Naive thymus-derived CD4-positive, alpha-beta T cell (primary cell): ENCODE measurements at regions of chr10 and their contacts with region 1.

Region 1: DNA sequence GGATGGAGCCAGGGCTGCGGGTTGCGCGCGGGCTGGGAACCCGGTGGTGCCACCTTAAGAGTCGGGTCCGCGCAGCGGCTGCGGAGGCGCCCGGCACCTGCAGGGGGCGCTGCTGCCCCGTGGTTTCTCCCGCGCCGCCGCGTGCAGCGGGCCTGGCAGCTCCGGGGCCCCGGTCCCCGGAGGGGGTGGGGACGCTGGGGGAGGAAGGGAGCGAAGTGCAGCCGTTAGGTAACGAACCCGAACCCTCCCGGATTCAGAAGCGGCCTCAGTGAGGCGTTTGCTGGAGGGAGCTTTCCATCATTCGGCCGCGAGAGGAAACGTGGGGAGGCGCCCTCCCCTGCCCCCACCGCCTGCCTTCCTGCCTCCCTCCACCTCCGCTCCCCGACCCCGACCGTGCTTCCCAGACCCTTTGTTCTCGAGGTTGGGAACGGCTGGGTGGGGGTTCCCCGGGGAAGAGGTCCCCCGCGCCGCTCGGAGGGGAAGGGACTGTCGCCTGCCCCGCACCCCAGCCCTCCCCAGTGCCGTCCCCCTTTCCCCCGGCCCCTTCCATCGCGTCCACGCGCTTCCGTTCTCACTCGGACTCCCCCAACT is 29.6 kb downstream of the SKIDA1 start:
- DNase-seq: peak; percentile 74 to 97 (median 89)
- ATAC-seq: peak; percentile 94
- H3K4me3 ChIP-seq: peak overlapping the region; percentile 79
- H3K4me3 Mint-ChIP-seq: peak overlapping the region; percentile 86 to 95 (median 90)
- H3K27ac ChIP-seq: no peak overlapping the region
- H3K27ac Mint-ChIP-seq: peak overlapping the region in 6 of 9 donors; percentile 47 to 76 (median 55)
- H3K4me1 ChIP-seq: peaks cover 20% of the 10 kb centered on the region in 2 donors
- H3K4me1 Mint-ChIP-seq: peaks cover 19 to 38% (median 25%) of the 10 kb centered on the region in 7 donors
- H3K27me3 ChIP-seq: peaks cover 0 to 32% of the 10 kb centered on the region in 2 donors
- H3K27me3 Mint-ChIP-seq: peaks cover 47 to 81% (median 52%) of the 10 kb centered on the region in 5 donors

Region 2: DNA sequence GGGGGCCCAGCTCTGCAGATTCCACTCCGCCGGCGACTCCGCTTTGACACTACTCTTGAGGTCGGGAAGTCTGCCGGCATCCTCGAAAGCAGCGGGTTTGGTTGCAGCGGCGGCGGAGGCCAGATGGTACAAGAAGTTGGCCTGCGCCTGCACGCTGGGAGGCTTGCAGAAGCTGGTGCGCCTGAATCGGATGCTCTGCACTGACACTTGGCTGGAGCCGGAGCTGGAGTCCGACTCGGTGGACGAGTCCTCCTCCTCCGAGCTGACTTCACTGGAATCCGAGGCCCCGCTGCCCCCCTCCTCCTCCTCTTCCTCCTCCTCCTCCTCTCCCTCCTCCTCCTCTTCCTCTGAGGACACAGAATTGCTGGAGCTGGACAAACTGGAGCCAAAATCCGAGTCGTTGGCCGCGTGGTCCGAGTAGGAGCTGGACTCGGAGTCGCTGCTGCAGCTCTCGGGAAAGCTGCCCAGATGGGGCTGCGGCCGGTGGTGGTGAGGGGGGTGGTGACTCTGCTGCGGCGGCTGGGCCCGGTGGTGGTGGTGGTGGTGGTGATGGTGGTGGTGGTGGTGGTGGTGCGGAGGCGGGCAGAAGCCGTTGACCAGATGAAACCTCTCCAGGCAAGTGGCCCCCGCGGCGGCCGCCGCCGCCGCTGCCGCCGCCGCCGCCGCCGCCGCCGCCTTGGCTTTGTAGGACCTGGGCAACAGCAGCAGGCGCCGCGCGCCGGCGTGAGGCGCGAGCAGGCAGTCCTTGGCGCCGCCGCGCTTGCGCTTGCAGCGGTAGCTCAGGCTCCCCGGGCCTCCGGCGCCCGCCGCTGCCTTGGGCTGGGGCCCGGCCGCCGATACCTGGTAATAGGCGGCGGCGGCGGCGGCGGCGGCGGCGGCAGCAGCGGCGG is 20.6 kb after region 1 on chr10:
- CTCF ChIA-PET with region 1: interaction called, 3 read pairs
- POLR2A ChIA-PET with region 1: interaction called, 13 read pairs
- intact Hi-C with region 1: loop called (anchors 1 kb)
- DNase-seq: peak in 8 of 9 donors; percentile 27 to 59 (median 40)
- ATAC-seq: peak; percentile 85
- H3K4me3 ChIP-seq: peak overlapping the region; percentile 28
- H3K4me3 Mint-ChIP-seq: peak overlapping the region; percentile 60 to 87 (median 80)
- H3K27ac ChIP-seq: no peak overlapping the region
- H3K27ac Mint-ChIP-seq: no peak overlapping the region
- H3K4me1 ChIP-seq: peaks cover 29 to 37% of the 10 kb centered on the region in 2 donors
- H3K4me1 Mint-ChIP-seq: peaks cover 17 to 46% (median 41%) of the 10 kb centered on the region in 7 donors
- H3K27me3 ChIP-seq: peaks cover 53 to 57% of the 10 kb centered on the region in 2 donors
- H3K27me3 Mint-ChIP-seq: peaks cover 68 to 86% (median 85%) of the 10 kb centered on the region in 5 donors

Region 3: GRCh38 chr10:21579291-21579690 is 83.4 kb after region 1 on chr10:
- CTCF ChIA-PET with region 1: no interaction called
- POLR2A ChIA-PET with region 1: no interaction called
- intact Hi-C with region 1: no loop called
- DNase-seq: no peak
- ATAC-seq: no peak
- H3K4me3 ChIP-seq: no peak overlapping the region
- H3K4me3 Mint-ChIP-seq: no peak overlapping the region
- H3K27ac ChIP-seq: no peak overlapping the region
- H3K27ac Mint-ChIP-seq: no peak overlapping the region
- H3K4me1 ChIP-seq: no peaks in the 10 kb centered on the region
- H3K4me1 Mint-ChIP-seq: peaks cover 11 to 54% (median 44%) of the 10 kb centered on the region in 7 donors
- H3K27me3 ChIP-seq: no peaks in the 10 kb centered on the region
- H3K27me3 Mint-ChIP-seq: no peaks in the 10 kb centered on the region

Region 4: DNA sequence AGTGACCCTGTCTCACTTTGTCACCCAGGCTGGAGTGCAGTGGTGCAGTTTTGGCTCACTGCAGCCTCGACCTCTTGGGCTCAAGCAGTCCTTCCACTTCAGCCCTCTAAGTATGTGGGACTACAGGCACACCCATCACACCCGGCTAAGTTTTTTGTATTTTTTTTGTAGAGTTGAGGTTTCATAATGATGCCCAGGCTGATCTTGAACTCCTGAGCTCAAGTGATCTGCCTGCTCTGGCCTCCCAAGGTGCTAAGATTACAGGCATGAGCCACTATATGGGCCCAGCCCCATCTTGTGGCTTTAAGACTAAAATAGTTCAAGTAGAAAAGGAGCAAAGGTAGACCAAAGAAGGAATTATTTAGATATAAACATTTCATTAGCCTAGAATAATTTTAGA is 103.7 kb after region 1 on chr10:
- CTCF ChIA-PET with region 1: no interaction called
- POLR2A ChIA-PET with region 1: no interaction called
- intact Hi-C with region 1: loop called in 1 of 2 experiments (anchors 10 kb)
- DNase-seq: no peak
- ATAC-seq: no peak
- H3K4me3 ChIP-seq: no peak overlapping the region
- H3K4me3 Mint-ChIP-seq: no peak overlapping the region
- H3K27ac ChIP-seq: no peak overlapping the region
- H3K27ac Mint-ChIP-seq: peak overlapping the region in 2 of 9 donors; percentile 48 to 78
- H3K4me1 ChIP-seq: no peaks in the 10 kb centered on the region
- H3K4me1 Mint-ChIP-seq: peaks cover 14 to 49% (median 39%) of the 10 kb centered on the region in 7 donors
- H3K27me3 ChIP-seq: no peaks in the 10 kb centered on the region
- H3K27me3 Mint-ChIP-seq: no peaks in the 10 kb centered on the region

Region 5: GRCh38 chr10:21746118-21746517 is 250.3 kb after region 1 on chr10:
- CTCF ChIA-PET with region 1: no interaction called
- POLR2A ChIA-PET with region 1: no interaction called
- intact Hi-C with region 1: loop called in 1 of 2 experiments (anchors 5 kb)
- DNase-seq: peak in 3 of 9 donors; percentile 19 to 37 (median 36)
- ATAC-seq: peak; percentile 72
- H3K4me3 ChIP-seq: no peak overlapping the region
- H3K4me3 Mint-ChIP-seq: peak overlapping the region in 9 of 10 donors; percentile 23 to 70 (median 53)
- H3K27ac ChIP-seq: peak overlapping the region; percentile 18
- H3K27ac Mint-ChIP-seq: peak overlapping the region; percentile 73 to 95 (median 90)
- H3K4me1 ChIP-seq: peaks cover 7 to 19% of the 10 kb centered on the region in 2 donors
- H3K4me1 Mint-ChIP-seq: peaks cover 8 to 44% (median 28%) of the 10 kb centered on the region in 7 donors
- H3K27me3 ChIP-seq: no peaks in the 10 kb centered on the region
- H3K27me3 Mint-ChIP-seq: no peaks in the 10 kb centered on the region

Region 6: DNA sequence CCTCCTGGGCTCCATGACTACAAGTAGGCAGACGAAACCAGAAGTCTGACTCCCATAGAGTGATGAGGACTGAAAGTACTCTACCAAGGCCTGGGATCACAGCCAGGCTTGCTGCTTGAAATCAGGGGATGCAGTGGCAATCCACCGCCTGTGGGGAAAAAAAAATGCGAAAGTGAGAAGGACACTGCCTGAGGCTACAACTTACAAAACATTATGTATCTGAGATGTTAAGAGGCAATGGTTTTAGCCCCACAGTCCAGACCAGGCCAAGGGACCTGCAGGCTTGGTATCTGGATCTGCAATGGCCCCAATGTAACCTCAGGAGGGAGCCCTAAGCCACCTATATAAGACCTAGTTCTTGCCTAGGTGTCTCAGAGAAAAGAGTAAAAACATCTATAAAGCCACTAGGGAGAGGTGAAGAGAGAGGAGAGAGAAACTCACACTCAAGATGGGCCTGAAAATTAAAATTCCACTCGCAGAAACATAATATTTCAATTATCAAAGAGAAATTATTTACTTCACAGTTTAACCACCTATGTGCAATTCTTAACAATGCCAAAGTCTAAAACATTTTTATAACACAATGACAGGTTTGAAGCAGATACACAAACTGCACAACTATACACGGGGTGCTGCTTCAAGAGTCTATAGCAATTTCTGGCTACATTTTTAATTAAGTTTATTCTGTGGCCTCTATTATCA is 493.8 kb after region 1 on chr10:
- CTCF ChIA-PET with region 1: interaction called, 13 read pairs
- POLR2A ChIA-PET with region 1: no interaction called
- intact Hi-C with region 1: loop called in 1 of 2 experiments (anchors 1 kb)
- DNase-seq: peak in 7 of 9 donors; percentile 14 to 52 (median 36)
- ATAC-seq: peak; percentile 89
- H3K4me3 ChIP-seq: no peak overlapping the region
- H3K4me3 Mint-ChIP-seq: no peak overlapping the region
- H3K27ac ChIP-seq: no peak overlapping the region
- H3K27ac Mint-ChIP-seq: peak overlapping the region in 2 of 9 donors; percentile 10 to 47
- H3K4me1 ChIP-seq: no peaks in the 10 kb centered on the region
- H3K4me1 Mint-ChIP-seq: peaks cover 0 to 14% (median 5%) of the 10 kb centered on the region in 7 donors
- H3K27me3 ChIP-seq: no peaks in the 10 kb centered on the region
- H3K27me3 Mint-ChIP-seq: no peaks in the 10 kb centered on the region

Region 7: GRCh38 chr10:22251751-22252223 is 755.9 kb after region 1 on chr10:
- CTCF ChIA-PET with region 1: no interaction called
- POLR2A ChIA-PET with region 1: no interaction called
- intact Hi-C with region 1: loop called (anchors 2 kb)
- DNase-seq: peak in 8 of 9 donors; percentile 48 to 76 (median 73)
- ATAC-seq: peak; percentile 73
- H3K4me3 ChIP-seq: peak overlapping the region; percentile 82
- H3K4me3 Mint-ChIP-seq: peak overlapping the region; percentile 90 to 100 (median 94)
- H3K27ac ChIP-seq: peak overlapping the region; percentile 87
- H3K27ac Mint-ChIP-seq: peak overlapping the region; percentile 95 to 100 (median 99)
- H3K4me1 ChIP-seq: peaks cover 0 to 4% of the 10 kb centered on the region in 2 donors
- H3K4me1 Mint-ChIP-seq: peaks cover 8 to 40% (median 38%) of the 10 kb centered on the region in 7 donors
- H3K27me3 ChIP-seq: no peaks in the 10 kb centered on the region
- H3K27me3 Mint-ChIP-seq: peaks cover 8 to 31% (median 10%) of the 10 kb centered on the region in 5 donors

Region 8: DNA sequence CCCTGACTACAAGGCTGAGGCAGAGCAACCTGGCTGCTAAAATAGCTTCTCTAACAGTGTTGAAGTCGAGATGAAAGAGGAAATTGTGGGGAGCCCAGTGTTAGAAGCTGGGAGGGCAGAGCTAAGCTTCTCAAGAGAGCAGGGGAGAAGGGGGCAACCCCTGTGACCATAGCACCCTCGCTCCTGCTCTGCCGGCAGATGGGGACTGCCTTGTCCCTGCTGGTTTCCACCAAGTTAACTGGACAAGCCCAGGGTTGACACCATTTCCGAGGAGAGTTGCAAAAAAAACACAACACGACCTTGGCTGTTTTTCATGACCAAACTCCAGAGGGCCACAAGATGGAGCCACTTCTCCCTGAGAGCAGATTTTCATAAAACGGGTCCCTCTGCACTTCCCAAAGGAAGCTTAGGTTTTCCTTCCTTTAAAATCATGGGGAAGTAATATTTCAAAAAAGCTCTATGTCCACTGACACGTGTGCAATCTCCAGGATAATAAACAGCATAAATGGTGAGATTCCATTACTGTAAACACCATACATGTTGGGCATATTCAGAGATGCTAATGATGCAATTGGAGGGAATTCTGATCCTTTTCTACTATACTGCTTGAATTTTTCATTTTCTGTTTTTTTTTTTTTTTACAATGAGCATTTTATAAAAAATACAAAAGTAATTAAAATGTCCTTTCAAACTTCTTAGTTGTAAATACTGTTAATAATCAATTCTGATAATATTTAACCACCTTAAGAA is 1078.1 kb after region 1 on chr10:
- CTCF ChIA-PET with region 1: no interaction called
- POLR2A ChIA-PET with region 1: no interaction called
- intact Hi-C with region 1: loop called in 1 of 2 experiments (anchors 10 kb)
- DNase-seq: peak in 5 of 9 donors; percentile 16 to 26 (median 24)
- ATAC-seq: peak; percentile 67
- H3K4me3 ChIP-seq: no peak overlapping the region
- H3K4me3 Mint-ChIP-seq: peak overlapping the region in 2 of 10 donors; percentile 24 to 66
- H3K27ac ChIP-seq: no peak overlapping the region
- H3K27ac Mint-ChIP-seq: peak overlapping the region; percentile 8 to 91 (median 62)
- H3K4me1 ChIP-seq: peaks cover 0 to 33% of the 10 kb centered on the region in 2 donors
- H3K4me1 Mint-ChIP-seq: peaks cover 32 to 80% (median 62%) of the 10 kb centered on the region in 7 donors
- H3K27me3 ChIP-seq: no peaks in the 10 kb centered on the region
- H3K27me3 Mint-ChIP-seq: no peaks in the 10 kb centered on the region